GM12878 (cell line): ENCODE measurements at regions of chr5 and their contacts with region 1.

Region 1: DNA sequence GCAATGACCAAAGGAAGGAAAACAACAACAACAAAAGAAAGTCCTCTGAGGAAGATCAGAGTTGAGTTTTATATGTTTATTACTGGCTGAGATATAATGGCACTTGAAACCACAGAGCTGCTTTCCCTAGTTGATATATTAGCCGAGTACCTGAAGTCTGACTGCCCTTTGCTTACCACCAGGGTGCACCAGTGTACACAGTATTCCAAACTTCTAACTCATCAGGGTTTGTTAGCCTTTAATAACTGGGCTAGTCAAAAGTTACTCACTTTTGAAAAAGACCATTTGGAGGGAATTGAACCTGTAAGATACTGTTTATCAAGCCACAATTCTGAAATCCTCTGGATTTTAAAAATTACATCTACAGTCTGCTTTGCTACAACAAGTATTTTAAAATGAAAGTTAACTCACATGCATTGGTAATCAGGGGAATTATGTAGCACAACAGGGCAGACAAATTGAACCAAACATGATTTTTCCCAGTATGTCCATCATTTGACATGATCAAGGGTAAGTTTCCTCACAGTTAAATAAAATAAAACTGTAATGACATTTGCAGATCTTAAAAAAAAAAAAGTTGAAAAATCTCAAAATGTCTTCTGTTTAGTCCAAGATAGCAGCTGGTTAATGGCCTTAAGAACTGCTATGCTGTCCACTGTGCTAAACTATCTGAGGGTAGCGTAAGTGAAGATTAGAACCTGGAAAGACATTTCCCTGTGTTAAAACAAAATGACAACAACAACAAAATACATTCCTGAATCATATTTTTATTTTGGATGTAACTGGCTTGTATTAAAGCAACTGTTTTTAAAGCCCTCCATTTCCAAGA is 57.3 kb upstream of the C6 start:
- DNase-seq: no peak
- ATAC-seq: peak; percentile 90
- H3K4me3 ChIP-seq: no peak overlapping the region
- H3K27ac ChIP-seq: no peak overlapping the region
- H3K4me1 ChIP-seq: no peaks in the 10 kb centered on the region
- H3K27me3 ChIP-seq: no peaks in the 10 kb centered on the region
- CTCF ChIP-seq: peak; percentile 58 to 70 (median 63); a peak in 5 of 6 replicates
- EP300 ChIP-seq: no peak
- POLR2A ChIP-seq: no peak
- RAD21 ChIP-seq: peak; percentile 71

Region 2: GRCh38 chr5:40904205-40904993 is 366.2 kb before region 1 on chr5:
- CTCF ChIA-PET with region 1: interaction called, 3 read pairs
- POLR2A ChIA-PET with region 1: no interaction called
- RAD21 ChIA-PET with region 1: interaction called, 4 read pairs
- SMC1A ChIA-PET with region 1: no interaction called
- in situ Hi-C with region 1: no loop called
- intact Hi-C with region 1: loop called (anchors 10 kb)
- DNase-seq: peak; percentile 15
- ATAC-seq: peak; percentile 99
- H3K4me3 ChIP-seq: no peak overlapping the region
- H3K27ac ChIP-seq: no peak overlapping the region
- H3K4me1 ChIP-seq: no peaks in the 10 kb centered on the region
- H3K27me3 ChIP-seq: no peaks in the 10 kb centered on the region
- CTCF ChIP-seq: peak; percentile 90 to 98 (median 98)
- EP300 ChIP-seq: no peak
- POLR2A ChIP-seq: no peak
- RAD21 ChIP-seq: peak; percentile 81

Region 3: GRCh38 chr5:41517909-41518308 is 247.3 kb after region 1 on chr5:
- CTCF ChIA-PET with region 1: interaction called, 18 read pairs
- POLR2A ChIA-PET with region 1: no interaction called
- RAD21 ChIA-PET with region 1: no interaction called
- SMC1A ChIA-PET with region 1: interaction called, 6 read pairs
- in situ Hi-C with region 1: no loop called
- intact Hi-C with region 1: loop called (anchors 1 kb)
- DNase-seq: no peak
- ATAC-seq: no peak
- H3K4me3 ChIP-seq: no peak overlapping the region
- H3K27ac ChIP-seq: no peak overlapping the region
- H3K4me1 ChIP-seq: no peaks in the 10 kb centered on the region
- H3K27me3 ChIP-seq: no peaks in the 10 kb centered on the region
- CTCF ChIP-seq: no peak
- EP300 ChIP-seq: no peak
- POLR2A ChIP-seq: no peak
- RAD21 ChIP-seq: no peak

Region 4: GRCh38 chr5:41524174-41524573 is 253.5 kb after region 1 on chr5:
- CTCF ChIA-PET with region 1: interaction called, 18 read pairs
- POLR2A ChIA-PET with region 1: no interaction called
- RAD21 ChIA-PET with region 1: interaction called, 7 read pairs
- SMC1A ChIA-PET with region 1: interaction called, 6 read pairs
- in situ Hi-C with region 1: no loop called
- intact Hi-C with region 1: loop called (anchors 1 kb)
- DNase-seq: no peak
- ATAC-seq: peak; percentile 34; the same call in 1 of the 3 replicates
- H3K4me3 ChIP-seq: no peak overlapping the region
- H3K27ac ChIP-seq: no peak overlapping the region
- H3K4me1 ChIP-seq: no peaks in the 10 kb centered on the region
- H3K27me3 ChIP-seq: no peaks in the 10 kb centered on the region
- CTCF ChIP-seq: peak; percentile 42 to 49 (median 44); a peak in 5 of 6 replicates
- EP300 ChIP-seq: no peak
- POLR2A ChIP-seq: no peak
- RAD21 ChIP-seq: peak; percentile 59

Region 5: GRCh38 chr5:41637869-41638268 is 367.2 kb after region 1 on chr5:
- CTCF ChIA-PET with region 1: interaction called, 5 read pairs
- POLR2A ChIA-PET with region 1: no interaction called
- RAD21 ChIA-PET with region 1: interaction called, 7 read pairs
- SMC1A ChIA-PET with region 1: no interaction called
- in situ Hi-C with region 1: no loop called
- intact Hi-C with region 1: loop called (anchors 2 kb)
- DNase-seq: no peak
- ATAC-seq: peak; percentile 57; the same call in 2 of the 3 replicates
- H3K4me3 ChIP-seq: no peak overlapping the region
- H3K27ac ChIP-seq: no peak overlapping the region
- H3K4me1 ChIP-seq: no peaks in the 10 kb centered on the region
- H3K27me3 ChIP-seq: no peaks in the 10 kb centered on the region
- CTCF ChIP-seq: peak in 1 of 3 experiments; percentile 11; a peak in 1 of 6 replicates
- EP300 ChIP-seq: no peak
- POLR2A ChIP-seq: no peak
- RAD21 ChIP-seq: no peak